PC-3 (cell line): ENCODE measurements at regions of chr12 and their contacts with region 1.

Region 1: GRCh38 chr12:43758728-43759563 is at the starts of genes IRAK4 and PUS7L:
- DNase-seq: peak; percentile 99
- ATAC-seq: peak; percentile 94
- H3K4me3 ChIP-seq: peak within 1 kb of the TSS; percentile 93
- H3K27ac ChIP-seq: peak within 1 kb of the TSS; percentile 60
- H3K4me1 ChIP-seq: peaks cover 35% of the 10 kb centered on the region
- H3K27me3 ChIP-seq: no peaks in the 10 kb centered on the region
- CTCF ChIP-seq: peak; percentile 40
- total RNA-seq, gene IRAK4: 5.6 and 8.9 TPM in 2 replicates
- total RNA-seq, gene PUS7L: 9.1 and 14.6 TPM in 2 replicates

Region 2: DNA sequence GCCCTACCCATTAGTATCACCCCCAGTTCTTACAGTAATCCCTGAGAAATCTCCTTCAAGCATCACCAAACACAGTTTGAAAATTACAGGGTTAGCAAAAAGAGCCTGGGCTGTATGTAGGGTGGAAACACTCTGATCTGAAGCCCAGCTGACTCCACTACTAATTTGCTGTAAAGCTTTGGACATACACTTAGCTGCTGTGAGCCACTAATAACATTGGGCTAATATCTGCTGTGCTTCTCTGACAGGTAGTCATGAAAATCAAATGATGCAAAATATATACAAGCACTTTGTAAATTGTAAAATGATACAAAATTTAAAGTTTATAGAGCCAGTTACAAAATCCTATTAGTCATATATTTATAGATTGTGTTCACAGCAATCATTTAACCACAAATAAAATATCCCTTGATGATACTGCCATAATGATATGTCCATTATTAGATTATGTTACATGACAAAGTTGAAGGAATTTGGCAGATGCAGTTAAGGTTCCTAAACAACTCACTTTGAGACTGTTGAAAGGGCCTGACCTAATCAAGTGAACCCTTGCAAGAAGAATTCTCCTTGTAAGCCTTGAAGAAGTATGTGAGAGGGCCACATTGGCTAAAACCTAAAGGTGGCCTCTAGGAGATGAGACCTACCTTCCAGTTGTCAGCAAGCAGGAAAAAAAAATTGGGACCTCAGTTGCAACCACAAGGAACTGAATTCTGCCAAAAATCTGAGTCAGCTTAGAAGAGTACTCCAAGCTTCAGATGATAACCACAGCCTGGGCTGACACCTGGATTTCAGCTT is 28.1 kb after region 1 on chr12:
- CTCF ChIA-PET with region 1: no interaction called
- POLR2A ChIA-PET with region 1: no interaction called
- intact Hi-C with region 1: loop called (anchors 2 kb)
- DNase-seq: peak; percentile 92
- ATAC-seq: peak; percentile 85
- H3K4me3 ChIP-seq: no peak overlapping the region
- H3K27ac ChIP-seq: peak overlapping the region; percentile 92
- H3K4me1 ChIP-seq: peaks cover 25% of the 10 kb centered on the region
- H3K27me3 ChIP-seq: no peaks in the 10 kb centered on the region
- CTCF ChIP-seq: no peak